G401 (cell line): ENCODE measurements at regions of chr9 and their contacts with region 1.

Region 1: GRCh38 chr9:34513567-34514214 is 9.1 kb downstream of the ENHO start:
- DNase-seq: peak; percentile 42

Region 2: GRCh38 chr9:34578241-34579103 is 64.8 kb after region 1 on chr9:
- in situ Hi-C with region 1: loop called (anchors 10 kb)
- DNase-seq: peak; percentile 63